Left cardiac atrium (tissue), 4 donors: ENCODE measurements at regions of chr1 and their contacts with region 1.

Region 1: DNA sequence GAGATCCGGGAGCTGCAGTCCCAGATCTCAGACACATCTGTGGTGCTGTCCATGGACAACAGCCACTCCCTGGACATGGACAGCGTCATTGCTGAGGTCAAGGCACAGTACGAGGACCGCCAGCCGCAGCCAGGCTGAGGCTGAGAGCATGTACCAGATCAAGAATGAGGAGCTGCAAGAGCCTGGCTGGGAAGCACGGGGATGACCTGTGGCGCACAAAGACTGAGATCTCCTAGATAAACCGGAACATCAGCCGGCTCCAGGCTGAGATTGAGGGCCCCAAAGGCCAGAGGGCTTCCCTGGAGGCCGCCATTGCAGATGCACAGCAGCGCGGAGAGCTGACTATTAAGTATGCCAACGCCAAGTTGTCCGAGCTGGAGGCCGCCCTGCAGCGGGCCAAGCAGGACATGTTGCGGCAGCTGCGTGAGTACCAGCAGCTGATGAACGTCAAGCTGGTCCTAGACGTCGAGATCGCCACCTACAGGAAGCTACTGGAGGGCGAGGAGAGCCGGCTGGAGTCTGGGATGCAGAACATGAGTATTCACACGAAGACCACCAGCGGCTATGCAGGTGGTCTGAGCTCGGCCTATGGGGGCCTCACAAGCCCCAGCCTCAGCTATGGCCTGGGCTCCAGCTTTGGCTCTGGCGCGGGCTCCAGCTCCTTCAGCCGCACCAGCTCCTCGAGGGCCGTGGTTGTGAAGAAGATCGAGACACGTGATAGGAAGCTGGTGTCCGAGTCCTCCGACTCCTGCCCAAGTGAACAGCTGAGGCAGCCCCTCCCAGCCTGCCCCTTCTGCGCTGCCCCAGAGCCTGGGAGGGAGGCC is 25.5 kb downstream of the ETV3L start:
- DNase-seq: peak; percentile 75
- ATAC-seq: peak in 1 of 2 donors; percentile 69

Region 2: DNA sequence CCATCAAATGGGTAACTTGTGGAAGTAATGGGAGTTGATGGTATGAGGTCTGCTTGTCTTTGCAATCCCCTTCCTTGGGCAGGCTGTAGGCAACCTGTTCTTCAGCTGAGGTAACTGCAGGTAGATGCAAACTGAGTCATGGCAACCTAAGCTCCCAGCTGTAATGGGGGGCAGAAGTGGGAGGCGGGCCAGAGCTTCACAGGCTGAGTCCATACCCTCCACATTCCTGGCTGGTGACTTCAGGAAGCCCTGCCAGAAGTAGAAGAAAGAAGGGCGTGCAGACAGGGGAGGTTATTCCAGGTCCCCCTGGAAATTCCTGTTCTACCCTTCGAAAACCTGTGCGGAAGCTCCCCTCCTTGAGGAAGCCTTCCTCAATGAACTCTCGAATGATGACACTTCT is 73.5 kb before region 1 on chr1:
- intact Hi-C with region 1: loop called in 1 of 2 experiments (anchors 10 kb)
- DNase-seq: no peak
- ATAC-seq: peak in 1 of 2 donors; percentile 26

Region 3: GRCh38 chr1:157147906-157148717 is 74.0 kb after region 1 on chr1:
- intact Hi-C with region 1: no loop called
- DNase-seq: no peak
- ATAC-seq: no peak